Cardiac septum (tissue), 1 donor: ENCODE measurements at regions of chr3 and their contacts with region 1.

Region 1: GRCh38 chr3:49171119-49171774 is at the start of gene KLHDC8B:
- DNase-seq: peak; percentile 94
- total RNA-seq, gene KLHDC8B: 132 TPM

Region 2: DNA sequence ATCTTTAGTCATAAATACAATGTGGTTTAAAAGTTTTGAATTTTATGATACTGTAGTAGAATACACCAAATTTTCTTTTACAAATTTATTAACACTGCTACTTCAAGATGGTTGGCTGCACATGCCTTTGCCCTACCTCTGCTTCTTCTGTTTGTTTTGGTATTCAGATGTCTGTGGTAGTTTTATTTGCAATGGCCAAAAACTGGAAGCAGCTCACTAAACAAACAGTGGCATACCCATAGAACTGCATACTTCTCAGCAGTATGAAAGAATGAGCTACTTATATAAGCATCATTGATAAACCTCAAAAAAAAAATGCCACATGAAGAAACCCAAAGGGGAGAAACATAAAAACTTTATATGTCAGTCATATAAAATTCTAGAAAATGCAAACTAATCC is 233.1 kb before region 1 on chr3:
- intact Hi-C with region 1: no loop called
- DNase-seq: no peak

Region 3: DNA sequence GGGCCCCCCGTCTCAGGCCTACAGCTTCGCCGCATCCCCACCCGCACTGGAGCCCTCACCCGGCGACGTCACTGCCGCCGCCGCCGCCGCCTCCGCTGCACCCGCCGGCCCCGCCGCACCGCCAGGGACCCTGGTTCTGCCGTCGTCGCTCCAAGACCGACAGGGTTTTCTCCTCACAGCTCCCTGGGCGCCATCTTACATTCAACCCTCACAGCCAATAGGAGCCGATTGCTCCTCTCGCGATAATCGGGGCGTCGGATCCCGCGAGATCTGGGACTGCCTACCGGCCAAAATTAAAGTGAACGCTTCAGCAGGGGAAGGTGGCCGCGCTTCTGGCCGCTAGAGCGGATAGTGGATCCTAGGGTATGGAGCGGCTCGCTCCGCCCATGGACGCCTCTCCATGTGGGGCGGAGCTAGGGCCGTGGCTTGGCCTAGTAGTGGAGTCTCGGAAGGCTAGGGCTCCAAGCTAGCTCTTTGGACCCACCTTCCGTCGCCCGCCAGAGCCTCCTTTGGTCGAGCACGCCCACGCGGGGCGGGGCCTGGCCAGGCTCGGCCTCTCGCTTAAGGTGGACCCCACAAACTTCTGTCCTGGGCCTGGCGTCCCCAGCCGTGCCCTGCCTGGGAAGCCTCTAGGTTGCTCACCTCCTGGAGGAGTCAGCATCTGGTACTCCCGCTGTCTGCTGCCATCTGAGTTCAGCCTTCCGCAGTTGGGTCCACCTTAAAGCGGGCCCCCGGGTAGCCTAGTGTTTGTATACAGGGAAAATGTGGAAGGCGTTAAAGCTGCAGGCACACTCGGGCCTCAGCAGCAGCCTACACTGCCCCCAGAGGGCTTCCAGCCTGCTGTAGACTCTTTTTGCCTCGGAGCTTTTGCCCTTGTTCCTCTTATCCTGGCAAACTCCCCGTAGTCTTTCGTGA is 77.1 kb before region 1 on chr3 and contains the start of gene QRICH1:
- intact Hi-C with region 1: loop called (anchors 2 kb)
- DNase-seq: peak; percentile 98
- total RNA-seq, gene QRICH1: 54.5 TPM

Region 4: GRCh38 chr3:49199239-49199899 is 28.1 kb after region 1 on chr3:
- intact Hi-C with region 1: loop called (anchors 2 kb)
- DNase-seq: peak; percentile 95

Region 5: GRCh38 chr3:49295489-49296058 is 124.3 kb after region 1 on chr3:
- intact Hi-C with region 1: loop called (anchors 2 kb)
- DNase-seq: no peak

Region 6: DNA sequence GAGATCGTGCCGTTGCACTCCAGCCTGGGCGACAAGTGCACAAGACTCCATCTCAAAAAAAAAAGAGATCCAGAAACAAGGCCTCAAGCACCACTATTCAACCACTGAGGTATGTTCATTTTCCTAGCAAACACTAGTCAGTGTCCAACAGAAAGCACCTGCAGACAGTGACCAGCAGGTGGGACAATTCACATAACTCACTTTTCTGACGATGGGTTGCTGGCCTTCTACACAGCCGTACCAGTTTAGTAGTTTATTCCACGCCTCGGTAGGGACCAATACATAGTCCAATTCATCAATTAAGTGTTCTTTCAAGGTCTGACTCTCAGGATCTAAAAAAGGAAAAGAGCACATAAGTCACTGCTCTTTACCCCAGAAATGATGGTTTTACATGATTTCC is 156.2 kb after region 1 on chr3:
- intact Hi-C with region 1: no loop called
- DNase-seq: no peak

Region 7: DNA sequence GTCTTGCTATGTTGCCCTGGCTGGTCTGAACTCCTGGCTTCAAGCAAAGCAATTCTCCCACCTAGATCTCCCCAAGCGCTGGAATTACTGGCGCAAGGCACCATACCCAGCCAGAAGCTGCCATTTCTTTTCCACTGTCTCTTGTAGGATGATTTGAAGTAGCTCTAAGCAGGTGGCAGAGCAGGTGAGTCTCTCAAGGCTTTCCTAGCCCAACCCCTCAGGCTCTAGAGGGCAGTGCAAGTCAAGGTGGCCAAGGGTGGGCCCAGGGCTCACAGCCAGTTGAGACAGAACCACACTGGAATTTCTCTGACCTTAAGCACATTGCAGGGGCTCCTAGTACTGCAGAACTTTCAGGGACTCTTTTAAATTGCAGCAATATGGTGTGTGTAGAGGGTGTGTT is 283.2 kb after region 1 on chr3:
- intact Hi-C with region 1: loop called (anchors 2 kb)
- DNase-seq: no peak